Gastrocnemius medialis (tissue), 4 donors: ENCODE measurements at regions of chr20 and their contacts with region 1.

Region 1: DNA sequence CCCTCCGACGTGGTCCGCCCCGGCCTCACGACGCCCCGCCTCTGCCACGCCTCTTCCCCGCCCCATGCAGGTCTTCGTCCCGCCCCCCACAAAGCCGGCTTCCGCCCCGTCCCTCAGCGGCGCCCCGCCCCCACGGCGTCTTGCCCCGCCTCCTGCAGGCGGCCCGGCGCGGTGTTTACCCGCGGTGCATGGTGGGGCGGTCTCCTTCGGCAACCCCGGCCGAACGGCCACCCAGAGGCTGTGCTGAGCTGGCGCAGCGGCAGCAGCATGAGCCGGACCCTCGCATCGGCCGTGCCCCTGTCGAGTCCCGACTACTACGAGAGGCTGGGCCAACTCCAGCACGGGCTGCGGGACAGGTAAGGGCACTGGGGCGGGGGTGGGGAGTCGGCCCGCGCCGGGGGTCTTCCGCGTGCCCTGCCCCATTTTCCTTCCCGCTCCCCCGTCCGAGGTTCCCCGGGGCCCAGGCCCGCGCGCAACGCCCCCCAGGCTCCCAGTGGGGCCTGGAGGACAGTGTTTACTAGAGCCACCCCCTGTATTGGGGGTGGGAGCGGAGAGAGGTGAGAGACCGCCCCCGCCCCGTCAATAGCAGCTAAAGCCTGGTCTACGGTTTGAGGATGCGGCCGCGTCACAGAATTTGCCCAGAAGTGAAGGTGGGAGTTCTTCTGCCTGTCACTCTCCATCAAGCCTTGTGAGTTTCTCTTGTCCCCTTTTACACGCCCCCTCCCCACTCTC is at the start of gene KIZ:
- DNase-seq: peak; percentile 95
- ATAC-seq: peak; percentile 92 to 95
- H3K4me3 ChIP-seq: peak within 1 kb of the TSS; percentile 94 to 100 (median 96)
- H3K27ac ChIP-seq: peak within 1 kb of the TSS; percentile 91 to 98 (median 95)
- H3K4me1 ChIP-seq: peaks cover 7 to 17% of the 10 kb centered on the region in 2 donors
- H3K27me3 ChIP-seq: no peaks in the 10 kb centered on the region
- CTCF ChIP-seq: peak; percentile 50 to 56 (median 53)
- POLR2A ChIP-seq: peak; percentile 89 to 93
- total RNA-seq, gene KIZ: 21.1 to 66.6 (median 34.6) TPM

Region 2: GRCh38 chr20:20712474-20713243 is 413.4 kb before region 1 on chr20 and contains the start of gene RALGAPA2:
- in situ Hi-C with region 1: loop called in 1 of 4 experiments (anchors 25 kb)
- intact Hi-C with region 1: no loop called
- DNase-seq: peak; percentile 97 to 99
- ATAC-seq: peak; percentile 86 to 87
- H3K4me3 ChIP-seq: peak within 1 kb of the TSS; percentile 67 to 87 (median 82)
- H3K27ac ChIP-seq: peak within 1 kb of the TSS; percentile 94 to 98 (median 97)
- H3K4me1 ChIP-seq: peaks cover 38 to 47% of the 10 kb centered on the region in 2 donors
- H3K27me3 ChIP-seq: no peaks in the 10 kb centered on the region
- CTCF ChIP-seq: peak in 1 of 5 experiments; percentile 30
- POLR2A ChIP-seq: peak; percentile 99
- total RNA-seq, gene RALGAPA2: 43.2 to 56.9 (median 52.0) TPM

Region 3: DNA sequence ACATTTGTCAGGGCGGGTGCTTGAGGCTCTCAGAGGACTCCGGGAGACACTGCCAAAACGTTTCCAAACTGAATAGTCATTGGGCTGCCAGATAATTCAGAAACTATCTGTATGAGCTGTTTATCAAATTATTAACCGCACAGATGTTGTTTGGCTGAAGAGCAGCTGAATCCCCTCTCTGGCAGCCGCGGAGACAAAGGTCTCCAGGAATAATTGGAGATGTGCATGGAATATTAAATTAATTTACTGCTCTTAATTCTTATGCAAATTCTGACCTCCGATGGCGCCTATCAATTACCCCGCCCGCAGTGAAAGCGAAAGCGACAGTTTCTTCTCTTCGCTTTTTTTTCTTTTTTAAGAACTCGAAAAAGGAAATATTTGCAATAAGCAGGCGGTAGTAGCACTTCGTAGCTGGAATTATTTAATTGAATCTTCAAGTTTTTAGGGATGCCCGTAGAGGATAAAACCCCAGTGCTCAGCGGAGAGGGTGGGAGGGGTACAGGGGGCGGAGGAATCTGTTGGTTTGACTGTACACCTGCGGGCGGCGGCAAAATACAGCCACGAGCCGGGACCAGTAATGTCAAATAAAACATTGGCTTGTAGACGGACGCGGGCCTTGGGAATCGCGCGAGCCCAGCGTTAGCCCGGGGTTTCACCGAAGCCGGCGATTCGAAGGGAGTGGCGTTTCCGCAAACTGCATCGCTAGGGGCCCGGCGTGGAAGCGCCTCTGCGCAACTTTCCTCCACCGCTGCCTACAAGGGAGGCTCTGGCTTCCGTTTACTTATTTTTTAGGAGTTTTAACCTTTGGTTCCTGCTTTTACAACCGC is 26.1 kb before region 1 on chr20:
- in situ Hi-C with region 1: no loop called
- intact Hi-C with region 1: loop called (anchors 2 kb)
- DNase-seq: no peak
- ATAC-seq: no peak
- H3K4me3 ChIP-seq: peak overlapping the region; percentile 43 to 59 (median 46)
- H3K27ac ChIP-seq: peak overlapping the region in 1 of 4 donors; percentile 55
- H3K4me1 ChIP-seq: peaks cover 16 to 42% of the 10 kb centered on the region in 2 donors
- H3K27me3 ChIP-seq: peaks cover 66 to 83% (median 79%) of the 10 kb centered on the region in 3 donors
- CTCF ChIP-seq: no peak
- POLR2A ChIP-seq: no peak

Region 4: DNA sequence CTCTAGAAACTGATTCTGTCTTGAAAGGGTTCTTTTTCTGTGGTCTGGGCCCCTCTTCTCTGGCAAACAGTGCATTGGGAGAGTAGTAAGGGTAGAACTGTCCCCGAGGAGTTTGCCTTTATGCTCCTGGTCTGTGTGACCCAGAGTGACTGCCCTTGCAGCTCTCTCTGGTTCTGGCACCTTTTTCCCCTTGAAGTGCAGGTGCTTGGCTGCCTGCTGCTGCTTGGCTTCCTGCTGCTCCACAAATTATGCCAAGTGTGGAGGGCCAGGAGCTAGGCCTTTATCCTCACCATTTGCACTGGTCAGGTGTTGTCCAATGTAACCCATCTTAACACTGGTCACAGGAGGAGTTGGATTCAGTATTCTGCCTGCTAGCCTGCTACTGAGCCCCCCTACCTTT is 11.1 kb after region 1 on chr20:
- in situ Hi-C with region 1: no loop called
- intact Hi-C with region 1: no loop called
- DNase-seq: no peak
- ATAC-seq: peak in 1 of 2 donors; percentile 18
- H3K4me3 ChIP-seq: no peak overlapping the region
- H3K27ac ChIP-seq: no peak overlapping the region
- H3K4me1 ChIP-seq: peaks cover 6 to 19% of the 10 kb centered on the region in 2 donors
- H3K27me3 ChIP-seq: no peaks in the 10 kb centered on the region
- CTCF ChIP-seq: no peak
- POLR2A ChIP-seq: no peak

Region 5: DNA sequence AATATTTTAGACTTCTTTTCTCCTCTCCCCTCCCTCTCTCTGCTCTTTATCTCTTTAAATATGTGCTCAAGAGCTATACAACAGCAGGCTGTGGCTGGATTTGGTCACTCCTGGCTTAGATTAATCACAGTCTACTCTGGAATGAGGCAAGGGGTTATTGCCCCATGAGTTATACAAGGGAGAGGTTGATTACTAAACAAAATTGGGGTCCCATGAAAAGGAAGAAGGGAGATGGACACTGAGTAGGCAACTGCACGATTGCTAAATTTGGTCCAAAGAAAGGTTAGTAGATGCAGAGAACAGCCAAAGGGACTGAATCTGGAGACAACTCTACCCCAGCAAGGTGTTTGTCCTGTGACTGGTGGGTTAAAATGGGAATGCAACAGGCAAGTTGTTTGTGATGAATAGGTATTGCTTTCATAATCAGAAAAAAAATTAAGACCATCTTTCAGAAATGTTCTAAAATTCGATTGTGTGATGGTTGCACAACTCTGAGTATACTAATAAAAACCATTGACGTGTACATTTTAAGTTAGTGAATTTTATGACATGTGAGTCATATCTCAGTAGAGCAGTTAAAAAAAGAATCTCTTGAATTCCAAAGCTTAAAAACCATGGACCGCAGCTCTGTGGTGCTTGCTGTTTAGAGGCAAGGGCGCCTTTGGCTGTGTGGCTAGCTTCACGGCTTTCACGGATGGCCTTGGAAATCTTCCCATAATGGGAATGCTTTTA is 57.0 kb after region 1 on chr20:
- in situ Hi-C with region 1: no loop called
- intact Hi-C with region 1: loop called (anchors 5 kb)
- DNase-seq: no peak
- ATAC-seq: peak; percentile 83 to 95
- H3K4me3 ChIP-seq: peak overlapping the region in 1 of 4 donors; percentile 26
- H3K27ac ChIP-seq: peak overlapping the region; percentile 21 to 69 (median 54)
- H3K4me1 ChIP-seq: peaks cover 15 to 18% of the 10 kb centered on the region in 2 donors
- H3K27me3 ChIP-seq: no peaks in the 10 kb centered on the region
- CTCF ChIP-seq: no peak
- POLR2A ChIP-seq: no peak

Region 6: DNA sequence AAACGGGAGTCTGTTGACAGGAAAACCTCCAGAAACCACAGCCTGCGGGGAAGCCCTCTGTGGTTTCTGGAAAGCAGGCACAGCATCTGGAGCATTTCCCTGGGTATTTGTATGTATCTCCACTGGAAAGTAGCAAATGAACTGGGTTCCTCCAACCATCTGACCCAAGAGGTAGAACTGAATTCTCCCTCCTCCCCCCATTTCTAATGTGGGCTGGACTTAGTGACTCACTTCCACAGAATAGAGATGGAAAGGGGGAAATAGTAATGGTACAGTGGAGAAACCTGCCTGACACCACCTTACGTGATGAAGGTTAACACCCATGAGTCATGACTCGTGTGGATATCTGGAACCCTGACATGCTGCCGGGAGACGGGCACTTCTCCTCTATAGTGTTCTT is 125.3 kb after region 1 on chr20:
- in situ Hi-C with region 1: no loop called
- intact Hi-C with region 1: no loop called
- DNase-seq: no peak
- ATAC-seq: no peak
- H3K4me3 ChIP-seq: no peak overlapping the region
- H3K27ac ChIP-seq: no peak overlapping the region
- H3K4me1 ChIP-seq: no peaks in the 10 kb centered on the region
- H3K27me3 ChIP-seq: no peaks in the 10 kb centered on the region
- CTCF ChIP-seq: no peak
- POLR2A ChIP-seq: no peak

Region 7: GRCh38 chr20:21303061-21303871 is 177.3 kb after region 1 on chr20 and contains the start of gene XRN2:
- in situ Hi-C with region 1: no loop called
- intact Hi-C with region 1: loop called (anchors 5 kb)
- DNase-seq: peak; percentile 91
- ATAC-seq: peak; percentile 97 to 98
- H3K4me3 ChIP-seq: peak within 1 kb of the TSS; percentile 70 to 90 (median 80)
- H3K27ac ChIP-seq: peak within 1 kb of the TSS; percentile 88 to 97 (median 96)
- H3K4me1 ChIP-seq: peaks cover 14 to 16% of the 10 kb centered on the region in 2 donors
- H3K27me3 ChIP-seq: no peaks in the 10 kb centered on the region
- CTCF ChIP-seq: peak in 1 of 5 experiments; percentile 14
- POLR2A ChIP-seq: peak; percentile 71 to 84
- total RNA-seq, gene XRN2: 42.0 to 68.4 (median 52.3) TPM